ENCODE measurements at regions of chr2 and their contacts with region 1.

Region 1: DNA sequence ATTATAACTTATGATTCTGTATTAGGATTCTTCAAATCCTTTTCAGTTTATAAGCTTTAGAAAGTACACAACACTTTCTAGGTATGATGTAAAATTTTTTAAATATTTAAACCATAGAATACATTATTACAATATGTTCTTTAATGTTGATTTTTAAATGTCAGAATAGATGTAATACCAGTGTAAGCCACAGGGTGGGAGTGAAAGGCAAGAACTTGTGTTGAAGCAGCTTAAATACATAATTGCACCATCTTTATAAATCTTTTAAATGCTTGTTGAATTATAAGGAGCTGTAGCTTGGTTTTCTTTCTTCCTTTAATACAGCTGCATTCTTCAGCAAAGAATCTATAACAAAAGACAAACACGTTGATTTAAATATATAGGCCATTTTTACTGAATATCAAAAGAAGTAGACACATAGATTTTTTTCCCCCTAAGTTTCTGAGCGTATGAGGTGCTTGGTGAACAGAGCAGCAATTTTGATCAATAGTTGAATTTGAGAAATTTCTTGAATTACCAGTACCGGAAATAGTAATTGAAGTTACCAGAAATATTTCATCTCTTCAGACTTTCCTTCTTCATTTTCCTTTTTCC is 63.0 kb downstream of the TANK start:
- DNase-seq: no peak
- H3K4me3 Mint-ChIP-seq: no peak overlapping the region
- H3K27ac Mint-ChIP-seq: no peak overlapping the region
- H3K4me1 Mint-ChIP-seq: peaks cover 5% of the 10 kb centered on the region
- H3K27me3 Mint-ChIP-seq: no peaks in the 10 kb centered on the region

Region 2: DNA sequence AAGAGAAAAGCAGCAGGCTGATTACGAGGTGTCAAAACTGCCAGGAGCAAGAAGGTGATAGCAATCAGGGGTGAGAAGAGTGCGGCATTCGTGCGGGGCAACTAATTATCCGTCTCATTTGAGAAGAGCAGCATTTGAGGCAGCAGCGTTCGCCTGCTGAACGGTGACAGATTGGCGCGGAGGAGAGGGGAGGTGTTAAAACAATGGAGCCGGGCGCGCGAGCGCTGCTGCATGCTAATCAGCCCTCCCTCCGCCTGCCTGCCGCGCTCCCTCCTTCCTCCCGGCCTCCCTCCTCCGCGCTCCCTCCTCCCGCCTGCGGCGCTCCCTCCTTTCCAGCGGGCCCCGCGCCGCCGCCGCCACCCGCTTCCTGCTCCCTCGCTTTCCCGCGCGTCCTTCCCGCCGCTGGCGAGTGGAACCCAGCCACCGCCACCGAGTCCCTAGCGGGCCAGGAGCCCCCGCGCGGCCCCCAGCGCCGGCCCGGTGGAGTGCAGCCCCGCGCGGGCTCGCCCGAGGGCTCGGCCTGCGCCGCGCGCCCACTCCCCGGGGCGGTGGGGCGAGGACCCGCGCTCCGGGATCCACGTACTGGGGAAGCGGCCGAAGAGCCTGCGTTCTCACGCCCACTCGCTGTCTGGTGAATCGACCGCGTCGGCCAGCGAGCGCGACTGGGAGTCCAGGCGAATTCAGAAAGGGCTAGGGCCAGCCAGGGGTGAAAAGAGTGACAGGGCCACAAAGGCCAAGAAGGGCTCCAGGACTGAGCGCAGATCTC is 15.5 kb after region 1 on chr2:
- CTCF ChIA-PET with region 1: interaction called, 16 read pairs
- POLR2A ChIA-PET with region 1: interaction called, 7 read pairs
- DNase-seq: peak; percentile 62
- H3K4me3 Mint-ChIP-seq: peak overlapping the region; percentile 79
- H3K27ac Mint-ChIP-seq: peak overlapping the region; percentile 15
- H3K4me1 Mint-ChIP-seq: peaks cover 45% of the 10 kb centered on the region
- H3K27me3 Mint-ChIP-seq: no peaks in the 10 kb centered on the region

Region 3: GRCh38 chr2:161243905-161244304 is 20.7 kb after region 1 on chr2:
- CTCF ChIA-PET with region 1: interaction called, 16 read pairs
- POLR2A ChIA-PET with region 1: interaction called, 7 read pairs
- DNase-seq: no peak
- H3K4me3 Mint-ChIP-seq: peak overlapping the region; percentile 81
- H3K27ac Mint-ChIP-seq: peak overlapping the region; percentile 81
- H3K4me1 Mint-ChIP-seq: peaks cover 45% of the 10 kb centered on the region
- H3K27me3 Mint-ChIP-seq: no peaks in the 10 kb centered on the region

Region 4: GRCh38 chr2:161273038-161273760 is 50.0 kb after region 1 on chr2:
- CTCF ChIA-PET with region 1: interaction called, 26 read pairs
- POLR2A ChIA-PET with region 1: no interaction called
- DNase-seq: no peak
- H3K4me3 Mint-ChIP-seq: no peak overlapping the region
- H3K27ac Mint-ChIP-seq: no peak overlapping the region
- H3K4me1 Mint-ChIP-seq: peaks cover 1% of the 10 kb centered on the region
- H3K27me3 Mint-ChIP-seq: peaks cover 12% of the 10 kb centered on the region

Measured in activated CD4-positive, alpha-beta memory T cell treated with anti-CD3 and anti-CD28 coated beads, Interleukin-2, amount 10 ng/mL, durations not matched to agents 7 days and 5 days (primary cell).